ENCODE measurements at regions of chr1 and their contacts with region 1.

Region 1: GRCh38 chr1:32052887-32053286 is 19.9 kb upstream of the TMEM39B start:
- DNase-seq: no peak
- H3K4me3 Mint-ChIP-seq: no peak overlapping the region
- H3K27ac Mint-ChIP-seq: no peak overlapping the region
- H3K4me1 Mint-ChIP-seq: peaks cover 9% of the 10 kb centered on the region
- H3K27me3 Mint-ChIP-seq: no peaks in the 10 kb centered on the region

Region 2: GRCh38 chr1:32063261-32063681 is 10.4 kb after region 1 on chr1:
- CTCF ChIA-PET with region 1: interaction called, 13 read pairs
- intact Hi-C with region 1: no loop called
- DNase-seq: no peak
- H3K4me3 Mint-ChIP-seq: no peak overlapping the region
- H3K27ac Mint-ChIP-seq: peak overlapping the region; percentile 80
- H3K4me1 Mint-ChIP-seq: peaks cover 9% of the 10 kb centered on the region
- H3K27me3 Mint-ChIP-seq: no peaks in the 10 kb centered on the region

Measured in activated naive CD4-positive, alpha-beta T cell treated with anti-CD3 and anti-CD28 coated beads for 36 hours (primary cell).